ENCODE measurements at regions of chr3 and their contacts with region 1.

Region 1: DNA sequence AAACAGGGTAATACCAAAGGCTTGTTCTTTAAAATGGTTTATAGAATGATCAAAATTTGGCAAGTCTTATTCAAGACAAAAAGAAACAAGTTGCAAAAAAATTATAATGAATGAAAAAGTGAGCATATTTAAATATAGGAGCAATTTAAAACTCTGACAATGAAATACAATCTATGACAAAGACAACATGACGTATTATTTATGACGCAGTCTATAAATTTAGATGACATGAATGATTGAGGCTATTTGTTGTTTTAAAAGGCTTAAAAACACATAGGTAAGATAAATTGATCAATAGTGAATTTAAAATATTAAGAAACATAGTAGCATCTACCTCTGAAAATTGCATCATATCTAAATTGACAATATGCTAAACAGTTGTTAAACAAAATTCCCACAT is 458.4 kb upstream of the CNTN4 start:
- DNase-seq: no peak
- ATAC-seq: no peak

Region 2: DNA sequence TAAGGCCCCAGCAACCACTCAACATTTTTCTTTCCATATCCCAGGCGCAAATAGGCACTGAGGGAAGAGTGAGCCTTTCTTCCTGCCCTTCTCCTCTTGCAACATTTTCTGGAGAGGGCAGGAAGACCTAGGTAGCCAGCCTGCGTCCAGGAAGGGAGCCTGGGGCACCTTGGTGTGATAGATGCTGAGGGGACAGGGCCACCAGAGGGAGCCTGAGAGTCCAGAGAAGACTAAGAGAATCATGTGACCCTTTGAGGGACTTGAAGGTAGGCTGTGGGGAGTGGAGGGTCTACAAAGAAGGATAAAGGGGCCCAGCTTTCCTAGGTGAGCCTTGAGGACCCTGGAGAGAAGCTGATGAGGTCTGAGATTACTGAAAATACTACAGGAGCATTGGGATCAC is 200.9 kb before region 1 on chr3:
- intact Hi-C with region 1: no loop called
- DNase-seq: no peak
- ATAC-seq: no peak

Region 3: DNA sequence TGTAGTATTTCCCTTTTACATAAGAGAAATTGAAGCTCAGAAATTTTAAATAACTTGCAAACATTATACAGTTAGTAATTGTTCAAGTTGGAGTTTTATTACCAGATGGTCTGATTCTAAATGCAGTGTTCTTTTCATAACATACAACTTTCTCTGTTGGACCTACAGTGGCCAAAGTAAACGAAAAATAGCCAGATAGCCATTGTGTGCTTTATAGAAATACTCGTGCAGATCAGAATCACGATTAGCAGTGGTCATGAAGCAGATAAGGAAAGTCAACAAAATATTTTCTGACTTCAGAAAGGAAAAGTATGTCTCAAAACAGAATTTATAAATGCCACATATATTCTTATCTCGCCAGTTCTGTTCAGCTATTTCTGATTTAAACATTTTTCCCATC is 110.6 kb before region 1 on chr3:
- intact Hi-C with region 1: no loop called
- DNase-seq: no peak
- ATAC-seq: no peak

Region 4: GRCh38 chr3:1774597-1774996 is 134.3 kb after region 1 on chr3:
- intact Hi-C with region 1: no loop called
- DNase-seq: no peak
- ATAC-seq: no peak

Region 5: GRCh38 chr3:3499012-3499562 is 1858.8 kb after region 1 on chr3:
- intact Hi-C with region 1: loop called (anchors 10 kb)
- DNase-seq: no peak
- ATAC-seq: no peak

Measured in left ventricle myocardium superior (tissue), 1 donor.